Right ventricle myocardium inferior (tissue), 1 donor: ENCODE measurements at regions of chr18 and their contacts with region 1.

Region 1: GRCh38 chr18:31977270-31977872 is 34.4 kb upstream of the TRAPPC8 start:
- DNase-seq: no peak
- ATAC-seq: peak; percentile 42

Region 2: DNA sequence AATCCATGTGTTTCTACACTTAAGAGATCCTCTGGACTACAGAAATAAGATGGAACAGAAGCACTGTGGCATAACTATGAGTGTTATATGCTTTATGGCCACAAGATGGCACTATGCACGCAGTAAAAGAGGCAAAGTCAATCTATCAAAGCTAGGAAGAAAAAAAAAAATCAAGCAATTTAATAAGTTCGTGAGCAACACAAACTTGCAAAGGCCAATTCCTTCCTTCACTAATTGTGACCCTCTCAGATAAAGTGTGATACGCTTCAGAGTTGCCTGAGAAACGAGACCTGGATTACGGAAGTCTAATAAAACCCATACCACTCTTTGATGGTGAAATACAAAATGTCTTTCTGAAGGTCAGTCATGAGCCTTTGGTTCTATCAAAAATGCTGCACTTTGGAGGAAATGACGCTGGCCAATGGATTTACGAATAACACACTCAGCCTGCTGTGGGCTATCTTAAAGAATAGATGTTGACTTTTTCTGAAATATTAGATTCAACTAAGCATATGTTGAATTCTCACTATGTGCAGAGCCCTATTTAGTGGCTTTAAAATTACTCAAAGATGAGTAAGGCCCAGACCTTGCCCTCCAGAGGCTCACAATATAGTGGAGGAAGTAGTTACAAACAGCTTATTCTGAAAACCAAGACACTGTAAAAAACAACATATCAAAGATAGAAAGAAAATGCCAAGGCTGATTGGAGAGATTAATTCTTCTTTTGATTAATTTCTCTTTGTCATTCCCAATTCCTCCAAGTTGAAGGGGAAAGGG is 421.2 kb before region 1 on chr18:
- intact Hi-C with region 1: loop called (anchors 10 kb)
- DNase-seq: no peak
- ATAC-seq: peak; percentile 70

Region 3: DNA sequence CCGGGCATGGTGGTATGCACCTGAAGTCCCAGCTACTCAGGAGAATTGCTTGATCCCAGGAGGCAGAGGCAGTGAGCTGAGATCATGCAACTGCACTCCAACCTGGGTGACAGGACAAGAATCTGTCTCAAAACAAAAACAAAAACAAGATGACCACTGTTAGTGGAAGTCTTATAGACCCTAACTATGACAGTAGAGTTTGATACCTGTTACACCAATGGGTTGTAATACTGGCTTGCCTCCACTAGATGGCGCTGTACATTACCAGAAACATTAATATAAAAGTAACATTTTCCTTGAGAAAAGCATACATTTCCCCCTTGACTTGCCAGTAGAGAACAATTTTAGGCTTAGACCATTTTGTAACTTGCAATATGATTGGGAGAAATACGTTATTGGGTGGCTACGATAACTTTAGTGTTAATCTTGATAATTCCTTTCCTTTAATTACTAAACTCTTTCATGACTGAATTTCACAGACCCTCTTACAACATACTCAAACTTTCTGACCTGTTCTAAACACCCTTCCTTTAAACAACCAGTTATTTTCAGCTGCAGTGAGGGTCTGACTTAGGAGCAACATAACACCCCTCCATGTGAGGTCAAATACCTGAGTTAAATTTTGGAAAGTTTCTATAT is 236.2 kb before region 1 on chr18:
- intact Hi-C with region 1: loop called (anchors 2 kb)
- DNase-seq: no peak
- ATAC-seq: no peak

Region 4: GRCh38 chr18:31819106-31819924 is 158.1 kb before region 1 on chr18:
- intact Hi-C with region 1: loop called (anchors 5 kb)
- DNase-seq: no peak
- ATAC-seq: no peak

Region 5: DNA sequence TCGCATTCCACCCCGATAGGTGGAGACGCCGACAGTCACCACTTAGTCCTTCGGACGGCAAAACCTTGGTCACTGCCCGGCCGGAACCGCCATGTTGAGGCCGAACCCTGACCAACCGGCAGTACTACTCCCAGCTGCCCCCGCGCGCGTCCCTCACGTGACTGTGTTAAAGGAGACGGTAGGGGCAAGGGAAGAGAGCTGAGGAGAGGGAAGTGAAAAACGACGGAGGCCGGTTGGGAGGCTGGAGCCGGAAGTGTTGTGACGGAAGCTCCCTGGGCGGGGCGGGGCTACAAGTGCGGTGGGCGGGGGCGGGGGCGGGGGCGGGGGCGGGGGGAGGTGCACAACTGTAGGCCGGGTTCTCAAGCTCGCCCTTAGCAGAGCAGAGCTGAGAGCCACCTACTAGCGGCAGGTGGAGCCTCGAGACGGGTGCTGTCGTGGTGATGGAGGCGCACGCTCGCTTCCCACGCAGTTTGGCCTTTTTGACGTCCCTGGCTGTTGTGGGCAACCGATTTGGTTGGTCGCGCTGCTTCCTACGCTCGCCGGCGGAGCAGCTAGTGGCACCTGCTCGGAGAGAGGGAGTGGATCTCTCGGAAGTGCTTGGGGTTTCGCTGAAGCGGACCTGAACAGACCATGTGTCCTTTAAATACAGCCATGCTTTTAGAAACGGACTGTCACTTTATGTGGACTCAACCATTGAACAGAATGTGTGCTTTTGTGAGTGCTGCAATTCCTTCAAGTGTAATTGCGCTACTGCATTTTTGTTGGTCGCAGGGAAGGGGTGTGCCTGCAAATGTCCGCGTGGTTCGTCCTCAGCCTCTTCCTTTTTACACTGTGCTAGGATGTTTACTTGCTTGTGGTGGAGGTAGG is 34.1 kb before region 1 on chr18 and contains the start of gene TRAPPC8:
- intact Hi-C with region 1: loop called (anchors 5 kb)
- DNase-seq: peak; percentile 100
- ATAC-seq: peak; percentile 99
- total RNA-seq, gene TRAPPC8: 30.9 TPM